Ovary (tissue), 10 donors: ENCODE measurements at regions of chr10 and their contacts with region 1.

Region 1: GRCh38 chr10:56715262-56715661 is 354.2 kb upstream of the ZWINT start:
- DNase-seq: no peak
- H3K4me3 ChIP-seq: no peak overlapping the region
- H3K27ac ChIP-seq: no peak overlapping the region
- H3K4me1 ChIP-seq: no peaks in the 10 kb centered on the region
- H3K27me3 ChIP-seq: no peaks in the 10 kb centered on the region
- CTCF ChIP-seq: no peak
- EP300 ChIP-seq: no peak
- POLR2A ChIP-seq: no peak

Region 2: DNA sequence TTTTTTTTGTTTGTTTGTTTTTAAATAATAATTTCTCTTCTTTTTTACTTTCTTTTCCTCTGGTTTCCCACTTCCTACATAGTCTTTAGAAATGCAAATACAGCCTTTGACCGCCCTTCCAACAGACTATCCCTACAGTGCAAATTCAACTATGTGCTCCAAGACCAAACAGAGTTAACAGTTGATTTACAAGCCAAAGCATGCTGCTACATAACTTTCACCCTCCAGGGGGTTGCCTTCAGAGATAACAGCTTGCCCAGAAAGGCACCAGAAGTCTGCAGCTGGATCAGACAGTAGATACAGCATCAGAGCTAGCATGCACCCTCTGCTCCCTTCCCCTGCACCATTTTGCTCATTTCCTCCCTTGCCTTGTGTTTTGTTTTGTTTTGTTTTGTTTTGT is 893.2 kb before region 1 on chr10:
- intact Hi-C with region 1: no loop called
- DNase-seq: no peak
- H3K4me3 ChIP-seq: no peak overlapping the region
- H3K27ac ChIP-seq: no peak overlapping the region
- H3K4me1 ChIP-seq: no peaks in the 10 kb centered on the region
- H3K27me3 ChIP-seq: no peaks in the 10 kb centered on the region
- CTCF ChIP-seq: no peak
- EP300 ChIP-seq: no peak
- POLR2A ChIP-seq: no peak

Region 3: GRCh38 chr10:56279270-56279669 is 436.0 kb before region 1 on chr10:
- intact Hi-C with region 1: no loop called
- DNase-seq: no peak
- H3K4me3 ChIP-seq: no peak overlapping the region
- H3K27ac ChIP-seq: no peak overlapping the region
- H3K4me1 ChIP-seq: no peaks in the 10 kb centered on the region
- H3K27me3 ChIP-seq: no peaks in the 10 kb centered on the region
- CTCF ChIP-seq: no peak
- EP300 ChIP-seq: no peak
- POLR2A ChIP-seq: no peak

Region 4: DNA sequence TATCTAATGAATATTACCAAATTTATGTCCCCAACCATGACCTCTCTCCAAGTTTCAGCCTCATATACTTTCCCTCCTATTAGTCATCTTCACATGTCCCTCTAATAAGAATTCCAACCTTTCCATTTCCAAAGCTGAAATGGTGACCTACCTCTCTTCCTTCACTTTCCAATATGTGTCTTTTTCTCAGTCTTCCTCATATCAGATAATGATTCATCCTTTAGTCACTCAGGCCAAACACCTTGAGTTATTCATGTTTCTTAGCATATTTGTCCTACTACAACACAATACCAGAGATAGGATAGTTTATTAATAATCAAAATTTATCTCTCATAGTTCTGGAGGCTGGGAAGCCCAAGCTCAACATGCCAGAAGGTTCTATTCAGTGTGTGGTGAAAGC is 35.7 kb before region 1 on chr10:
- intact Hi-C with region 1: loop called in 1 of 4 experiments (anchors 5 kb)
- DNase-seq: no peak
- H3K4me3 ChIP-seq: no peak overlapping the region
- H3K27ac ChIP-seq: no peak overlapping the region
- H3K4me1 ChIP-seq: no peaks in the 10 kb centered on the region
- H3K27me3 ChIP-seq: no peaks in the 10 kb centered on the region
- CTCF ChIP-seq: no peak
- EP300 ChIP-seq: no peak
- POLR2A ChIP-seq: no peak

Region 5: DNA sequence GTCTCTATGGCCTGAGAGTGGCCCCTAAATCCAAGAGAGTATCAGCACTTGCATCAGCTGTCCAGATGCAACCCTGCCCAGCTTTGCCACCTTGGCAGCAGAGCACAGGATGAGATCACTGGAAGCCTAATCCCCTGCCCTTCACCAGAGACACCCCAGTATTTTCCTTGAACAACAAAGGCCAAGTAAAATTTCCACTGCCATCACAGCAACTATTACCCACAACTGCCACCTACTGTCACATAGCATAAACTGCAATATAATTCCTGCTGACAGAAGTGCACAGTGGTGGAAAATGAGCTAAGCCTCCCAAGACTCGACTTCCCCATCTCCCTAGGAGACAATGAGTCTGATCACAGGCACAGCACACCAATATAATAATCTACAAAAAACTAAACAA is 108.6 kb after region 1 on chr10:
- intact Hi-C with region 1: no loop called
- DNase-seq: no peak
- H3K4me3 ChIP-seq: no peak overlapping the region
- H3K27ac ChIP-seq: no peak overlapping the region
- H3K4me1 ChIP-seq: no peaks in the 10 kb centered on the region
- H3K27me3 ChIP-seq: no peaks in the 10 kb centered on the region
- CTCF ChIP-seq: no peak
- EP300 ChIP-seq: no peak
- POLR2A ChIP-seq: no peak

Region 6: GRCh38 chr10:56881218-56881617 is 166.0 kb after region 1 on chr10:
- intact Hi-C with region 1: no loop called
- DNase-seq: no peak
- H3K4me3 ChIP-seq: no peak overlapping the region
- H3K27ac ChIP-seq: no peak overlapping the region
- H3K4me1 ChIP-seq: no peaks in the 10 kb centered on the region
- H3K27me3 ChIP-seq: no peaks in the 10 kb centered on the region
- CTCF ChIP-seq: no peak
- EP300 ChIP-seq: no peak
- POLR2A ChIP-seq: no peak